WTC11 (cell line): ENCODE measurements at regions of chr3 and their contacts with region 1.

Region 1: GRCh38 chr3:52056968-52057805 is 816 bp upstream of the DUSP7 start:
- DNase-seq: peak; percentile 99
- ATAC-seq: peak; percentile 77
- H3K4me3 Mint-ChIP-seq: peak overlapping the region; percentile 83
- H3K27ac Mint-ChIP-seq: peak overlapping the region; percentile 94
- H3K4me1 Mint-ChIP-seq: peaks cover 30% of the 10 kb centered on the region
- H3K27me3 Mint-ChIP-seq: peaks cover 21% of the 10 kb centered on the region
- CTCF ChIP-seq: no peak

Region 2: DNA sequence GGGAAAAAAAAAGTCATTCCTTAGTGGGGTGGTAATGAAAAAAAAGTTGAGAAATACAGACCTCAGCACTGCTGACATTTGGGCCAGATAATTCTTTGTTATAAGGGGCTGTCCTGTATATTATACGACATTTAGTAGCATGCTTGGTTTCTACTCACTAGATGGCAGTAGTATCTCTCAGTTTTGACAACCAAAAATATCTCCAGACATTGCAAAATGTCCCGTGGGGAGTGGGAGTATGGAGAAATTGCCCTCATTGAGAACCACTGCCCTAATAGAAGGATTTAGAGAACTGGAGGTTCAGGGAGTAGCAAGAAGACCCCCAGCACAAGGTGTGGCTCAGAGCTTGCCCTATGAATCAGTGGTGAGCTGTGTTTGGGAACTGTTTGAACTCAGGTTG is 414.7 kb before region 1 on chr3:
- CTCF ChIA-PET with region 1: no interaction called
- POLR2A ChIA-PET with region 1: no interaction called
- DNase-seq: no peak
- ATAC-seq: no peak
- H3K4me3 Mint-ChIP-seq: no peak overlapping the region
- H3K27ac Mint-ChIP-seq: no peak overlapping the region
- H3K4me1 Mint-ChIP-seq: no peaks in the 10 kb centered on the region
- H3K27me3 Mint-ChIP-seq: no peaks in the 10 kb centered on the region
- CTCF ChIP-seq: no peak

Region 3: DNA sequence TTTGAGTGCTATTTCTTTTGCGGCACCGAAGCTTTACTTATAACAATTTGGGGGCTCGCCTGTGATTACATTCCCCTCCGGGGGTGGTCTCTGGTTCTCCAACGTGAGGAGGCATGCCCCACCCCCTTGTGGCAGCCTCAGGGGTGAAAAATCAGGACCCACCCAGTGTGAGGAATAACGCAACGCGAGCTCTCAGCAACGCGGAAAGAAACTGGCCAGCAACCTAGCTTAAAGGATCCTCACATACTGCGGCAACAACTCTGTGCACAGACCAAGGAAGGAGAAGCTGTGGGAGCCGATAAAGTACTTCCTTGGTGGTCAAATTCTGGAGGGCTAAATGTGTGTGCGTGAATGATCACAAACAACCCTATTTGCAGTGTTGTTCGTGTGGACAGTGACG is 159.8 kb before region 1 on chr3:
- CTCF ChIA-PET with region 1: no interaction called
- POLR2A ChIA-PET with region 1: no interaction called
- DNase-seq: no peak
- ATAC-seq: no peak
- H3K4me3 Mint-ChIP-seq: no peak overlapping the region
- H3K27ac Mint-ChIP-seq: no peak overlapping the region
- H3K4me1 Mint-ChIP-seq: peaks cover 16% of the 10 kb centered on the region
- H3K27me3 Mint-ChIP-seq: peaks cover 5% of the 10 kb centered on the region
- CTCF ChIP-seq: no peak

Region 4: DNA sequence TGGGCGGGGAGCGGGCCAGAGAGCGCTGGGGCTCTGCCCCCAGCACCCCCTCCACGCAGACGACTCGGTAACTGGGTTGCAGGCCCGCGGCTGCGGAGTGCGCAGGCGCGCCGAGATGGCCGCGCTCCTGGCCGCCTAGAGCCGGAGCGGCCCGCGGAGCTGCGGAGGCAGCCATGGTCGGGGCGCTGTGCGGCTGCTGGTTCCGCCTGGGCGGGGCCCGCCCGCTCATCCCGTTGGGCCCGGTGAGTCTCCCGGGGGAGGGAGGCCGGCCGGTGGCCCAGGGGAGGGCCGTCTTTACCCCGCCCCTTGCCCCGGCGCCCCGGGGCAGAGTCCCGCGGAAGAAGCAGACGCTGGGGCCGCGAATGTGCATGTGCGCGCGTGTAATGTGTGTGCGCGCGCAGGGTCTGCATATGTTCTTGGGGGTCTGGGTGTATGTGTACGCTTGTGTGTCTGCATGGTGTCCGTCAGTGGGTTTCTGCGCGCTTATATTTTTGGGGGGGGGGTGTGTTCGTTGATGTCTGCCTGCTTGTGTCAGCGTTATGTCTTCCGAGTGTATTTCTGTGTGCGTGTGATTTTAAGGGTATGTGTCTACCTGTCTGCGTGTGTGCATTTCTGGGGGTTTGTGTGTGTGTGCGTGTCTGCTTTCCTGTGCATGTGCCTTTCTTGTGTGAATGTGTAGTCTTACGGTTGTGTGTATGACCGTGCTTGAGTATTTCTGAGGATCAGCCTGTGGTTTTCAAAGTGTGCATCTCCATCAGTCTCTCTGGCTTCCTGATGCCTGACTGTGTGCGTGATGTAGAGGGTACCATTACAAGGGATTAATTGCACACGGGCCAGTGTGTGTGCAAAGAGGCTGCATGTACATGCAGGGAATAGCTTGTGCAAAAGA is 82.0 kb before region 1 on chr3 and contains the start of gene ABHD14A:
- CTCF ChIA-PET with region 1: interaction called, 15 read pairs
- POLR2A ChIA-PET with region 1: no interaction called
- DNase-seq: peak; percentile 69
- ATAC-seq: peak; percentile 70
- H3K4me3 Mint-ChIP-seq: peak within 1 kb of the TSS; percentile 79
- H3K27ac Mint-ChIP-seq: no peak within 1 kb of the TSS
- H3K4me1 Mint-ChIP-seq: peaks cover 22% of the 10 kb centered on the region
- H3K27me3 Mint-ChIP-seq: peaks cover 43% of the 10 kb centered on the region
- CTCF ChIP-seq: no peak
- total RNA-seq, gene ABHD14A: 3.8 to 5.9 TPM (median 4.5 TPM) in 3 replicates

Region 5: GRCh38 chr3:52041118-52041731 is 16.0 kb before region 1 on chr3:
- CTCF ChIA-PET with region 1: interaction called, 58 read pairs
- POLR2A ChIA-PET with region 1: interaction called, 6 read pairs
- DNase-seq: peak; percentile 41
- ATAC-seq: peak; percentile 46
- H3K4me3 Mint-ChIP-seq: no peak overlapping the region
- H3K27ac Mint-ChIP-seq: no peak overlapping the region
- H3K4me1 Mint-ChIP-seq: peaks cover 9% of the 10 kb centered on the region
- H3K27me3 Mint-ChIP-seq: no peaks in the 10 kb centered on the region
- CTCF ChIP-seq: no peak

Region 6: GRCh38 chr3:52076896-52077780 is 20.0 kb after region 1 on chr3:
- CTCF ChIA-PET with region 1: interaction called, 20 read pairs
- POLR2A ChIA-PET with region 1: no interaction called
- DNase-seq: no peak
- ATAC-seq: no peak; the same call in 1 of the 2 replicates
- H3K4me3 Mint-ChIP-seq: no peak overlapping the region
- H3K27ac Mint-ChIP-seq: no peak overlapping the region
- H3K4me1 Mint-ChIP-seq: no peaks in the 10 kb centered on the region
- H3K27me3 Mint-ChIP-seq: no peaks in the 10 kb centered on the region
- CTCF ChIP-seq: no peak

Region 7: DNA sequence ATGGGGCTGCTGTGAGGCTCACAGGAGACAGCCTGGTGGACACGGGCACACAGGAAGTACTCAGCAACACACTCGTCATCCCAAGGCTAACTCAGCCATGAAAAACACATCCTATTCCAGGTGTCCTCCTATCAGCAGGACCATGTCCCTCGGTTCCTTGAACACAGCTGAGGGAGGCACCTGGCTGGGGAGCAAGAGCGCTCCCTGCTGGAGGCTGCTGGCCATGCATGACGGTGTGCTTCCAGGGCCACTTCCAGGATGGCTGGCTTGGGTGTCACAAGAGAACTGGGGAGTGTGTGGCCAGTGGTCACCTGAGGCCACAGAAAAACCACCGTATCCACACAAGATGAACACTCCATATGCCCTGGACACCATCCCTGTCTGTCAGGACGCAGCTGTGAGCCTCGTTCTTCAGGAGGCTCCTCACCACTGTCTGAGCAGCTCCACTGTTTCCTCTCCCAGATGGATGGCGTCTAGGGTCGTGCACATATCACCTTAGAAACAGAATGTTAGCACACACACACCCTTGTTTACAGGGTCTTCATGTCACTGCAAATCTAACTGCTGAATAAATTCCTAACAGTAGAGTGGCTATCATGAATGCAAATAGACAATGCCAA is 66.0 kb after region 1 on chr3:
- CTCF ChIA-PET with region 1: interaction called, 27 read pairs
- POLR2A ChIA-PET with region 1: interaction called, 3 read pairs
- DNase-seq: peak; percentile 84
- ATAC-seq: peak; percentile 95
- H3K4me3 Mint-ChIP-seq: no peak overlapping the region
- H3K27ac Mint-ChIP-seq: no peak overlapping the region
- H3K4me1 Mint-ChIP-seq: no peaks in the 10 kb centered on the region
- H3K27me3 Mint-ChIP-seq: no peaks in the 10 kb centered on the region
- CTCF ChIP-seq: peak; percentile 96

Region 8: DNA sequence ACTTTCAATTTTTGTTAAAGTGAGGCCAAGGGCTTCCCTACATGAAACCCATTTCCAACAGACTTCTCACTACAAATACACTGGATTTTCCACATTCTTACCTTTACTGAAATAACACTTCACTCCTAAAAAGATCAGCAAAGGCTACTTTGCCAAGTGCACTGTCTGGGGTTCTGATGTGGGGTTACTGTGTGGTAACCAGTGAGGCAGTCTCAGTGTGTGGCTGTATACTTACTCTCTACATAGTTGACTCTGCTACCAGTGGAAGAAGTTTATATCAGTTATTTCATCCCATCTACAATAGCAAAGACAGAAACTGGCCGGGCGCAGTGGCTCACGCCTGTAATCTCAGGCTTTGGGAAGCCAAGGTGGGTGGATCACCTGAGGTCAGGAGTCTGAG is 215.6 kb after region 1 on chr3:
- CTCF ChIA-PET with region 1: no interaction called
- POLR2A ChIA-PET with region 1: no interaction called
- DNase-seq: no peak
- ATAC-seq: no peak
- H3K4me3 Mint-ChIP-seq: no peak overlapping the region
- H3K27ac Mint-ChIP-seq: peak overlapping the region; percentile 57; the same call in 1 of the 2 replicates
- H3K4me1 Mint-ChIP-seq: peaks cover 27% of the 10 kb centered on the region
- H3K27me3 Mint-ChIP-seq: no peaks in the 10 kb centered on the region
- CTCF ChIP-seq: no peak

Region 9: DNA sequence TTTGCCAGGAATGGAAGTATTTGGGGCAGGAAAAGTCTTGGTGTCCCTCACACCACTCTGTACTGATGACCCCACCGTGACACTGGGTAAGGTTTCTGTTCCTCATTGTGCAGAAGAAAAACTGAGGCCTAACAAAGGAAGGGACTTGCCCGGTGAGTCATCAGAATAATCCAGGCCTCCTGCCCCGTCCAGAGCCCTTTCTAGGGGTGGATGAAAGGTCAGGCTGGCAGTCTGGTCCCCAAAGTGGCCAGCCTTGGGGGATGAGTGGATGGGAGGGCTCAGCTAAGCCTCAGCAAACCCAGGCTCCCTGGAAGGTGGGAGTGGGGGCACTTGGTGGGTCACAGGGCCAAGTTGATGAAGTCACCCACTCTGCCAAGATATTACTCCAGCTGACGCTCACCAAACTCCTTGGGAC is 256.6 kb after region 1 on chr3:
- CTCF ChIA-PET with region 1: no interaction called
- POLR2A ChIA-PET with region 1: no interaction called
- DNase-seq: no peak
- ATAC-seq: no peak
- H3K4me3 Mint-ChIP-seq: no peak overlapping the region
- H3K27ac Mint-ChIP-seq: no peak overlapping the region
- H3K4me1 Mint-ChIP-seq: peaks cover 6% of the 10 kb centered on the region; the same call in 1 of the 2 replicates
- H3K27me3 Mint-ChIP-seq: peaks cover 17% of the 10 kb centered on the region
- CTCF ChIP-seq: no peak